ENCODE measurements at regions of chr6 and their contacts with region 1.

Region 1: GRCh38 chr6:24581084-24581669 is 64.8 kb downstream of the KIAA0319 start:
- DNase-seq: peak; percentile 8 to 42
- ATAC-seq: peak; percentile 73 to 84
- H3K4me3 ChIP-seq: no peak overlapping the region
- H3K27ac ChIP-seq: no peak overlapping the region
- H3K4me1 ChIP-seq: peaks cover 0 to 4% of the 10 kb centered on the region in 2 donors
- H3K27me3 ChIP-seq: no peaks in the 10 kb centered on the region
- CTCF ChIP-seq: peak; percentile 35 to 73 (median 67)
- POLR2A ChIP-seq: no peak

Region 2: GRCh38 chr6:24287239-24287638 is 293.9 kb before region 1 on chr6:
- in situ Hi-C with region 1: no loop called
- intact Hi-C with region 1: no loop called
- DNase-seq: no peak
- ATAC-seq: no peak
- H3K4me3 ChIP-seq: no peak overlapping the region
- H3K27ac ChIP-seq: no peak overlapping the region
- H3K4me1 ChIP-seq: peaks cover 0 to 6% of the 10 kb centered on the region in 2 donors
- H3K27me3 ChIP-seq: no peaks in the 10 kb centered on the region
- CTCF ChIP-seq: no peak
- POLR2A ChIP-seq: no peak

Region 3: DNA sequence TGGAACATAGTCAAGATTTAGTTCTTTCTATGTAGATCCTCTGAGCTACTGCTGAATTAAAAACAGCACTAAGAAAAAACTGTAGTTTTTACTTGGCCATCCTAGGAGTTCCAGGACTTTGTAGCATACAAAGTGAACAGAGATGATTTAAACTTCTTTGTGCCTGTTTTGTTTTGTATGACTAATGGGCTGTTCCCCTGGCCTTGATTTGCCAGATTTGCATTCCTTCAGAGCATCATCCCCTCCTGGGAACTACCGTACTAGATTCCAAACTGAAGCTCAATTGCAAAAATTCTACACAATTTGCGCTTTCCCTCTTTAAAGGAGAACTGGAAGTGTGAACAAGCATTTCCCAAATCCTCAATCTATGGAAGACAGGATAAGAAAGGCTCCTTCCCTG is 108.8 kb after region 1 on chr6:
- in situ Hi-C with region 1: loop called (anchors 5 to 10 kb)
- intact Hi-C with region 1: loop called (anchors 1 kb)
- DNase-seq: no peak
- ATAC-seq: no peak
- H3K4me3 ChIP-seq: no peak overlapping the region
- H3K27ac ChIP-seq: no peak overlapping the region
- H3K4me1 ChIP-seq: peaks cover 0 to 17% of the 10 kb centered on the region in 2 donors
- H3K27me3 ChIP-seq: no peaks in the 10 kb centered on the region
- CTCF ChIP-seq: no peak
- POLR2A ChIP-seq: no peak

Region 4: DNA sequence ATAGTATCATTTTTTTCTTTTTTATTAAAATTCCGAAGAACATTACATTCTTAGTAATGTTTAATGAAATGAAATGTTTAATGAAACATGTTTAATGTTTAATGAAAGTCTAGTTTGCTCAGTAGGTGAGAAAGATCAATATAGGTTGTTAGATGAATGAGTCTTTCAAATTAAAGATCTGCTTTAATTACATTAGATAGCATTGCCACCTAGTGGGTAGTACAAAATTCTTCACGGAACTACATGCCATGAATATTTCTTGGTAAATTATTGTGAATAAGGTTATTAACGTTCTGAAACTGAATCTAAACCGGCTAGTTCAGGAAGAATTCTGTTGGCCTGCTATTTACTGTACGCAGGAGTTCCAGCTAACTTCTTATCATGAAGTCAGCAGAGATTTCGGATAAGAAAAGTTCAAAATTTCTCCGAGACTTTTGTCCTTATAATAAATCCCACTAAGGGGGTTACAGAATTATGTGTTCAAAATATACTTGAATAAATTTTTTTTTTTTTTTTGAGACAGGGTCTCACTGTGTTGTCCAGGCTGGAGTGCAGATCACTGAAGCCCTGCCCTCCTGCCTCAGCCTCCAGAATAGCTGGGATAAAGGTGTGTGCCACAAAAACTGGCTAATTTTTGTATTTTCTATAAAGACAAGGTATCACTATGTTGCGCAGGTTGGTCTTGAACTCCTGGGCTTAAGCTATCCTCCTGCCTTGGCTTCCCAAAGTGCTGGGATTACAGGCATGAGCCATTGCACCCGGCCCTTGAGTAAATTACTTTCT is 185.7 kb after region 1 on chr6:
- in situ Hi-C with region 1: loop called (anchors 10 kb)
- intact Hi-C with region 1: loop called (anchors 5 kb)
- DNase-seq: no peak
- ATAC-seq: no peak
- H3K4me3 ChIP-seq: no peak overlapping the region
- H3K27ac ChIP-seq: no peak overlapping the region
- H3K4me1 ChIP-seq: no peaks in the 10 kb centered on the region
- H3K27me3 ChIP-seq: no peaks in the 10 kb centered on the region
- CTCF ChIP-seq: peak in 3 of 5 experiments; percentile 16 to 34 (median 30)
- POLR2A ChIP-seq: no peak

Region 5: DNA sequence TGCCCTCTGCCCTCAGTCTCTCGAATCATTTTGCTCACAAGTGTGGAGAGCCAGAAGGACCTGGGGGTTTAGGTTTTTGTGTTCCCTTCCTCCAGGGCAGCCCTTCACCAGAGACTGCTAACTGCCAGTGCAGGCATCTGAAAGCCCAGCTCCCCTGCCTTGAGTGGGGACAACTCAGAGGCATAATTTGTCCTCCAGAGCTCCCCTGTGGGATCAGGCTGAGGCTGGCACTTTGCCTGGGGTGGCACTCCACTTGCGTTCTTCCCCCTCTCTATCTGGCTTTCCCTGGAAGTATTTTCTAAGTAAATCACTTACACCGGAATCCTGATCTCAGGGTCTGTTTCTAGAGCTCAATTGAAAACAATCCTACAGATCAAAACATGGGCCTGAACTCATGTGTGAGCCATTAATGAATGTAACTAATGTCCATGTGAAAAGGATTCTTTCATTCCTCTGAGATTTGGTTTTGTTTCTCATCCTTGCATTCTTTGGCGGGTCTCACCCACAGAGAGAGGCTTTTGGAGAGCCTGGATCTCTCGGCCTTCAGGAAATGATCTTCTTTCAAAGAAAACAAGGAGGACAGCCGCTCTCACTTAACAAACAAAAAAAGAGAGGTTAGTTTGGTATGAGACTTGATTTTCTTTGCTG is 480.2 kb after region 1 on chr6:
- in situ Hi-C with region 1: loop called in 2 of 4 experiments (anchors 10 to 25 kb)
- intact Hi-C with region 1: no loop called
- DNase-seq: no peak
- ATAC-seq: no peak
- H3K4me3 ChIP-seq: no peak overlapping the region
- H3K27ac ChIP-seq: no peak overlapping the region
- H3K4me1 ChIP-seq: no peaks in the 10 kb centered on the region
- H3K27me3 ChIP-seq: no peaks in the 10 kb centered on the region
- CTCF ChIP-seq: no peak
- POLR2A ChIP-seq: no peak